Right ventricle myocardium inferior (tissue), 1 donor: ENCODE measurements at regions of chr18 and their contacts with region 1.

Region 1: DNA sequence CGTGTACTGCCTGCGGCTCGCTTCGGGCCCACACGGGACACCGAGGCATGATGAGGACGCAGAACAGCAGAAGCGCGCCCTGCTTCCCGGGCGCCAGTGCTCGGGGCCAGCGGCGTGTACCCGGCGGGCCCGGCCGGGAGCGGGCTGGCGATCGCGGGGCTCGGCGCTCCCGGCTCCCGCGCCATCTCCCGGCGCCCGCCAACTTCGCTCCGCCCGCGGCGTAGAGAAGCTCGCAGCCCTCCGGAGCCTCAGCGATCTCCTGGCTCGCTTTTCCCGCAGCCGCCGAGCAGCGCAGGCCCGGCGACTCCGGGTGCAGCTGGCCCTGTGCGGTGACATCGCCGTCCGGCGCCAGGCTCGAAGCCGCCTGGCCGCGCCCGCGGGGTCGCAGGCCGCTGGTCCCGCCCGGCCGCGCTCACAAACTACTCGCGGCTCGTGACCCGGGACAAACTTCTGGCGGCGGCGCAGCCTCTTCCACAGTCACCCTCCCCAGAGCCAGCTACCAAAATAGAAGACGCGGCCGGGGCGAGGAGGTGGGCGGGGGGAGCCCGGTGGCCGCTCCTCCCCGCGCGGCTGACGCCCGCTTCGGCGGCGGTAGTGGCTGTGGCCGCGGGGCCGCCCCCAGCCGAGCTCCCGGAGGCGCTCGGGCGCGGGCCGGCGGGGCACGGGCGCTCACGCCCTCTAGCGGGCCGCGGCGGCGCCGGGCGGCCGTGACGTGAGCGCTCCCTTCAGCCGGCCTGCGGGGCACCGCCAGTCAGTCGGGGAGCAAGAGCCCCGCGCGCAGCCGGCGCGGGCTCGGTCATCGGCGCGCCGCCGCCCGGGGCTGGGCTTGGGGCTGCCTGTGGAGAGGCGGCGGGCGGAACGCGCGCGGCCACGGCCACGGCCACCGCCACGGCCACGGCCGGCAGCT is at the start of gene PTPRM:
- DNase-seq: peak; percentile 94
- ATAC-seq: peak; percentile 95
- total RNA-seq, gene PTPRM: 102 TPM

Region 2: GRCh38 chr18:7370802-7371201 is 196.0 kb before region 1 on chr18:
- intact Hi-C with region 1: loop called (anchors 2 kb)
- DNase-seq: peak; percentile 77
- ATAC-seq: peak; percentile 81

Region 3: GRCh38 chr18:7485616-7486015 is 81.2 kb before region 1 on chr18:
- intact Hi-C with region 1: loop called (anchors 1 kb)
- DNase-seq: no peak
- ATAC-seq: peak; percentile 84

Region 4: DNA sequence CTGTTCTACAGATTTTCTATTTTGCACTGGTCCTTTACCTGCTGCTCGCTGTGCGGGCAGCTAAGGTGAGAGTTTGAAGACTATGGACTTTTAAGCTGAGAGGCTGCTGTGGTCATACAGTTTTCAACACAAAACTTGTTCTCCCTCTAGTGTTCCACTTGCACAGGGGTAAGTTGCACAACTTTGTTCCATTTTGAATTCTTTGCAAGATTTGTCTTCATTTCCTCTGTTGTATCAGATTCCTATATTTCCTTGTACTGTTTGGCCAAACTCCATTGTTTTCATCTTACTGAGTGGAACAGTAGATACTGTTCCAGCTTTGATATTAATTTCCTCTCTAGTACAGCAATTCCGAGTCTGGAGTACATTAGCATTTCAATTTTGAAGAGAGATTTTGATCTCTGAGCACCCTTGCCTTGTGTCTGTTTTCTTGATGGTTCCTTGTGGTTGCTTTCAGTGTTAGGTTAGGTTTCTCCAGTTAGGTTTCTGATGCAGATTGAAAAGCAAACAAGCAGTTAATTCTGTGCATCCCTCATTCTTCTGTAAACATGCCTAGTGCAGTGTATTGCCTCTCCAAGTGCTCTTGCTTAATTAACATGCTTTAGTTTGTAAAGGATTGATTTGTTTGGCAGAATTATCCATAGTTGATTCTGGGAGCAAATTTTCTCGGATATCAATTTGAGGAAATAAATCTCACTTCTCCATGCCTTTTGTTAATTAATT is 189.1 kb after region 1 on chr18:
- intact Hi-C with region 1: loop called (anchors 5 kb)
- DNase-seq: no peak
- ATAC-seq: peak; percentile 37

Region 5: GRCh38 chr18:8480506-8481328 is 913.9 kb after region 1 on chr18:
- intact Hi-C with region 1: loop called (anchors 10 kb)
- DNase-seq: no peak
- ATAC-seq: peak; percentile 74